Activated T-helper 1 cell treated with anti-CD3 and anti-CD28 coated beads, Interleukin-12 subunit alpha, Interleukin-12 subunit beta, Interleukin-2, Interleukin-4 antibody, amounts not matched to agents 30 ng/mL and 10 ng/mL and 1 ng/mL, durations not matched to agents 14 hours and 24 hours and 36 hours (primary cell): ENCODE measurements at regions of chr22 and their contacts with region 1.

Region 1: DNA sequence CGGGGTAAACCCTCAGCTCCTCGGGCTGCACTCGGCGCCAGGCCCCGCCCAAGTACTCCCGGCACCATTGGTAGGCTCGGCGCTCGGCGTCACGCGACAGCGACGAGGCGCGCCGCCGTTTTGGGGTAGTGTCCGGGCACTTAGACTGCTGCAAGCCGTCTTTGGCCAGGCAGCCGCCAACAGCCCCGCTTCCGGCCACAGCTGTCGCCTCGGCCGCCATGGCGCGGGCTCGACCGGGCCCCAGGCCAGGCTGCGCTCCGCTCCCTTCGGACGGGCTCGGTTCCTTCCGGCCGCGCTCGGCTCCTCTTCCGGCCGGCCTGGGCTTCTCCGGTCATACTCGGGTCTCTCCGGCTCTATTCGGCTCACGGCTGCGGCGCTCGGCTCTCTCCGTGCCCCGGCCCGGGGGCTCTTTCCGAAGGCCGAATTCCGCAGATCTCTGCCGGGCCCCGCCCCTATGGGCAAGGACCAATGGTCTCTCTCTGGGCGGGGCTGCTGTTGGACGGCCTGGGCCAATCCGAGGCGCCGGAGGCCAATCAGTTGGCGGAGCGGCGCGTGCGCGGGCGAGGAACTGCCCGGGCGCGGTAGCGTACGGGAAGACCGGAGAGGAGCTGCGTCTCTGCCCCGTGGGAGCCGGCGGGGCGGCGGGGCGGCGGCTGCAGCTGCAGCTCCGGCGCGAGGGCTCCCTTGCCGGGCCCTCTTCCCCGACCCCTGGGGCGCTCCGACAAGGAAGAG is at the start of gene CHKB:
- DNase-seq: peak; percentile 100
- H3K4me3 Mint-ChIP-seq: peak within 1 kb of the TSS; percentile 94
- H3K27ac Mint-ChIP-seq: peak within 1 kb of the TSS; percentile 96
- H3K4me1 Mint-ChIP-seq: peaks cover 22% of the 10 kb centered on the region
- H3K27me3 Mint-ChIP-seq: no peaks in the 10 kb centered on the region
- total RNA-seq, gene CHKB: 81.0 and 88.7 TPM in 2 replicates

Region 2: GRCh38 chr22:50474668-50475492 is 107.8 kb before region 1 on chr22 and contains the start of gene SBF1:
- intact Hi-C with region 1: loop called (anchors 2 kb)
- DNase-seq: peak; percentile 87
- H3K4me3 Mint-ChIP-seq: peak within 1 kb of the TSS; percentile 87
- H3K27ac Mint-ChIP-seq: peak within 1 kb of the TSS; percentile 74
- H3K4me1 Mint-ChIP-seq: peaks cover 39% of the 10 kb centered on the region
- H3K27me3 Mint-ChIP-seq: peaks cover 12% of the 10 kb centered on the region
- total RNA-seq, gene SBF1: 113 and 116 TPM in 2 replicates

Region 3: GRCh38 chr22:50530877-50531545 is 51.7 kb before region 1 on chr22:
- intact Hi-C with region 1: loop called (anchors 1 kb)
- DNase-seq: peak; percentile 83
- H3K4me3 Mint-ChIP-seq: peak overlapping the region; percentile 93
- H3K27ac Mint-ChIP-seq: peak overlapping the region; percentile 99
- H3K4me1 Mint-ChIP-seq: peaks cover 48% of the 10 kb centered on the region
- H3K27me3 Mint-ChIP-seq: no peaks in the 10 kb centered on the region

Region 4: GRCh38 chr22:50562523-50563412 is 20.0 kb before region 1 on chr22 and contains the start of gene SYCE3:
- intact Hi-C with region 1: loop called (anchors 1 kb)
- DNase-seq: peak; percentile 98
- H3K4me3 Mint-ChIP-seq: peak within 1 kb of the TSS; percentile 88
- H3K27ac Mint-ChIP-seq: peak within 1 kb of the TSS; percentile 77
- H3K4me1 Mint-ChIP-seq: peaks cover 20% of the 10 kb centered on the region
- H3K27me3 Mint-ChIP-seq: peaks cover 9% of the 10 kb centered on the region
- total RNA-seq, gene SYCE3: 0.83 TPM in 1 of 2 replicates, not detected in the other

Region 5: DNA sequence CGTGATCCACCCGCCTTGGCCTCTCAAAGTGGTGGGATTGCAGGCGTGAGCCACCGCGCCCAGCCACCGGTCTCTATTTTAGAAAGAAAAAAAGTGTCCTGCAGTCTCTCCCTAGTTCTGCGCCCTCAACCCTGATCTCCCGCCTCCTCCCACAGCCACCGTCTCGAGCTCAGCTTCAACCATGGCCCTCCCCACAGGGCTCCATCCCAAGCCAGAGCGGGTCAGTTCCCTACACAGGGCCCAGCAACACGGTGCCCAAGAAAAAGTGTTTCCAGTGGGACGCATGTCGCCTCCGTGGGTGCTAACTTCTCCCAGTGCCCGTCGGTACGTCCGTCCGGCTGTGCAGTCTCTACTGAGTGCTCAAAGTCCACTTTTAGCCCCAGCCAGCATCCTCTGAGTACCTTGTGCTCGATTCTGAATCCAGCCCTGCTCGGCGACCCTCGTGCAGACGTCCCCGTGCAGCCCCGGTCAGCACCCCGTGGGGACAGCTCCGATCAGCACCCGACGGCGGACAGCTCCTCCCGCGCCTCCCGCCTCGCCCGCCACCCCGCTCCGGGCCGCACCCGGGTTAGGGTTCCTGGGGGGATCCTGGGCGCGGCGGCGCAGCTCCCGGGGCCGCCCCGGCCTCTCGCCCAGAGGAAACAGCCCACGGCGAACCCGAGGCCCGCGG is 17.2 kb after region 1 on chr22:
- intact Hi-C with region 1: no loop called
- DNase-seq: peak; percentile 57
- H3K4me3 Mint-ChIP-seq: peak overlapping the region; percentile 25
- H3K27ac Mint-ChIP-seq: no peak overlapping the region
- H3K4me1 Mint-ChIP-seq: no peaks in the 10 kb centered on the region
- H3K27me3 Mint-ChIP-seq: peaks cover 36% of the 10 kb centered on the region

Region 6: GRCh38 chr22:50691521-50691920 is 108.8 kb after region 1 on chr22:
- intact Hi-C with region 1: loop called (anchors 2 kb)
- DNase-seq: peak; percentile 17
- H3K4me3 Mint-ChIP-seq: no peak overlapping the region
- H3K27ac Mint-ChIP-seq: no peak overlapping the region
- H3K4me1 Mint-ChIP-seq: peaks cover 7% of the 10 kb centered on the region
- H3K27me3 Mint-ChIP-seq: peaks cover 11% of the 10 kb centered on the region